Activated B cell treated with CpG ODN at 0.5 μM for 24 hours (primary cell): ENCODE measurements at regions of chr5 and their contacts with region 1.

Region 1: GRCh38 chr5:112160652-112161391 is 258.3 kb downstream of the EPB41L4A start:
- DNase-seq: peak; percentile 93
- ATAC-seq: peak; percentile 99
- H3K4me3 Mint-ChIP-seq: peak overlapping the region; percentile 97
- H3K27ac Mint-ChIP-seq: peak overlapping the region; percentile 82
- H3K4me1 Mint-ChIP-seq: peaks cover 25% of the 10 kb centered on the region
- H3K27me3 Mint-ChIP-seq: no peaks in the 10 kb centered on the region
- CTCF ChIP-seq: peak; percentile 89

Region 2: DNA sequence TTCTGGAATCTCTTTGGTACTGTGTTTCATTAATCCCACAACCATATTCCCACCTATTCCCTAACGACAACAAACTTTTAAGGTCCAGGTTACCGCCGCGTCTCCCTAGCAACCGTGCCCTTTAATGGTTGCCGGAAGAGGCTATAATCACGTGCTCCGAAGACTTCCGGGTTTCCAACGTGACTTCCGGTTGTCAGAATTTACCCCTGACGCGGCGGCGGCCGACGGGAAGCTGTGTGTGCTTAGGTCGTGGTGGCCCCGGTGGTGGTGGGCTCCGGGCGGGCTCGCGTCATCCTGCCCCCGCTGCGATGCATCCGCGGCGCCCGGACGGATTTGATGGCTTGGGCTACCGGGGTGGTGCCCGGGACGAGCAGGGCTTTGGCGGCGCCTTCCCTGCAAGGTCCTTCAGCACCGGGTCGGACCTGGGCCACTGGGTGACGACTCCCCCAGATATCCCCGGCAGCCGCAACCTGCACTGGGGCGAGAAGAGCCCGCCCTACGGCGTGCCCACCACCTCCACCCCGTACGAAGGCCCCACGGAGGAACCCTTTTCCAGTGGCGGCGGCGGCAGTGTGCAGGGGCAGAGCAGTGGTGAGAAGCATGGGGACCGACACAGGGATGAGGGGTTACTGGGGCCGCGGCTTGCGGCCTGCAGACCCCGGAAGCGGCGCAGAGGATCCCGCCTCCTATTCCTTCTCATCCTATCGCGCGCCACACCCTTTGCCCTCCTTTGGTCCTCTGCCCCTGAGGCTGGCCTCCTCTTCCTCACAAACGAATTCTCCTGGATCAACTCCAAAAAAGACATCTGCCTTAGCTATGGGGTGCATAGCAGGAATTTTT is 1421.8 kb before region 1 on chr5 and contains the start of gene SLC25A46:
- CTCF ChIA-PET with region 1: no interaction called
- POLR2A ChIA-PET with region 1: interaction called, 5 read pairs
- intact Hi-C with region 1: loop called (anchors 2 kb)
- DNase-seq: peak; percentile 79
- ATAC-seq: peak; percentile 82
- H3K4me3 Mint-ChIP-seq: peak within 1 kb of the TSS; percentile 97
- H3K27ac Mint-ChIP-seq: peak within 1 kb of the TSS; percentile 96
- H3K4me1 Mint-ChIP-seq: peaks cover 21% of the 10 kb centered on the region
- H3K27me3 Mint-ChIP-seq: peaks cover 3% of the 10 kb centered on the region
- CTCF ChIP-seq: no peak
- total RNA-seq, gene SLC25A46: 39.9 and 42.2 TPM in 2 replicates

Region 3: DNA sequence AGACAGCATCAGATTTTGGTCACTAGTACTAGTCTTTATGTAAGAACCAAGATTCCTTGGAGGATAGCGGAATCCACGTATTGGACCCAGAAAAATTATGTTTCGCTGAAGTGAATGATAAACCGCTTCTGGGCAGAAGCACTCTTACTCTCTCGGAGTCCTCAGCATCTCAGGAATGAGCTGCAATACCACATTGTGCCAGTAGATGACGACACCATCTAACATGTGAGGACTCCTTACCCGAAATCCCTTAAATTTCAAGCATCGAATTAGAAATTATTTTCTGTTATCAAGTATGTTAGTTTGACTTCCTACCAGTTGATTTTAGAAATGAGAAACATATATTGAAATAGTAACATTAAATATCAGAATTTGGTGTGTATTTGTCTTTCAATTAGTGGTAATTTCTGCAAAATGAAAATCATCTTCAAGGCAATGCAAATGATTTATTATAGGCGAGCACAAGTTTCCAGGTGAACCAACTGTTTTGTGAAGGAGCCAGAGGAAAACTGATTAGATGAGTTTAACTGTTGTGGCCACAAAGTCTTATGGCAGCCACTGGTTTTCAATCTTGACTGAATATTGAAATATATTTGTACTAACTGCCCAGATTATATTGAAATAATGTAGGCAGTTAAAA is 1002.6 kb before region 1 on chr5:
- CTCF ChIA-PET with region 1: no interaction called
- POLR2A ChIA-PET with region 1: no interaction called
- intact Hi-C with region 1: loop called (anchors 5 kb)
- DNase-seq: no peak
- ATAC-seq: peak; percentile 49
- H3K4me3 Mint-ChIP-seq: no peak overlapping the region
- H3K27ac Mint-ChIP-seq: no peak overlapping the region
- H3K4me1 Mint-ChIP-seq: no peaks in the 10 kb centered on the region
- H3K27me3 Mint-ChIP-seq: peaks cover 10% of the 10 kb centered on the region
- CTCF ChIP-seq: peak; percentile 99

Region 4: GRCh38 chr5:112116371-112116770 is 44.5 kb before region 1 on chr5:
- CTCF ChIA-PET with region 1: no interaction called
- POLR2A ChIA-PET with region 1: no interaction called
- intact Hi-C with region 1: no loop called
- DNase-seq: no peak
- ATAC-seq: no peak
- H3K4me3 Mint-ChIP-seq: no peak overlapping the region
- H3K27ac Mint-ChIP-seq: no peak overlapping the region
- H3K4me1 Mint-ChIP-seq: no peaks in the 10 kb centered on the region
- H3K27me3 Mint-ChIP-seq: peaks cover 9% of the 10 kb centered on the region
- CTCF ChIP-seq: no peak

Region 5: GRCh38 chr5:112174959-112175594 is 14.3 kb after region 1 on chr5:
- CTCF ChIA-PET with region 1: interaction called, 34 read pairs
- POLR2A ChIA-PET with region 1: interaction called, 3 read pairs
- intact Hi-C with region 1: no loop called
- DNase-seq: no peak
- ATAC-seq: peak; percentile 73
- H3K4me3 Mint-ChIP-seq: no peak overlapping the region
- H3K27ac Mint-ChIP-seq: no peak overlapping the region
- H3K4me1 Mint-ChIP-seq: peaks cover 4% of the 10 kb centered on the region
- H3K27me3 Mint-ChIP-seq: no peaks in the 10 kb centered on the region
- CTCF ChIP-seq: no peak

Region 6: DNA sequence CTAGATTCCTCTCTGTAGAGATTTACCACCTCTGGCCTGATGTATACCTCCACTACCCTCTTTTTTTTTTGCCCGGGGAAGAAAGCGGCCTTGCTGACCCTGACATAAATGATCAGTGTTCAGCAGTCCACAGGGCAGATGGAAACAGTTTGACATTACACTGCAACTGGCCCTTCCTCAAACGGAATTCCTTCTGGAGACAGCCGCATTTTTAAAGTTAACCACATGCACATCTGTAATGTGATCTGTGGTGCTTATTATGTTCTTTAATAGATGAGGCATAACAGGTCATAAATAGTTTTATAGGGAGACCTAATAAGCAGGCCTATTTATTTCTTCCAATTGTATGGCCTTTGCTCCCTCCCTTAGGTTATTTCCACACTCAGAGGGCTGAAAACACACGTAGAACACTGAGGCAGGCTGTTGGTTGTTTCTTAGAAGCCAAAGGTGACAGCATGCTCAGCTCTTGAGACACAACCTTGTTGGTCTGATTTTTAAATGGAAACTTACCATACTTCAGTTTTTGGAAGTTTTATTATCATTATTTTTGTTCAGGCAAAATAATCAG is 492.9 kb after region 1 on chr5:
- CTCF ChIA-PET with region 1: no interaction called
- POLR2A ChIA-PET with region 1: no interaction called
- intact Hi-C with region 1: no loop called
- DNase-seq: no peak
- ATAC-seq: no peak
- H3K4me3 Mint-ChIP-seq: no peak overlapping the region
- H3K27ac Mint-ChIP-seq: no peak overlapping the region
- H3K4me1 Mint-ChIP-seq: no peaks in the 10 kb centered on the region
- H3K27me3 Mint-ChIP-seq: peaks cover 11% of the 10 kb centered on the region
- CTCF ChIP-seq: no peak

Region 7: GRCh38 chr5:112976432-112977309 is 815.8 kb after region 1 on chr5 and contains the start of gene DCP2:
- CTCF ChIA-PET with region 1: no interaction called
- POLR2A ChIA-PET with region 1: interaction called, 7 read pairs
- intact Hi-C with region 1: loop called (anchors 2 kb)
- DNase-seq: peak; percentile 93
- ATAC-seq: peak; percentile 98
- H3K4me3 Mint-ChIP-seq: peak within 1 kb of the TSS; percentile 100
- H3K27ac Mint-ChIP-seq: peak within 1 kb of the TSS; percentile 96
- H3K4me1 Mint-ChIP-seq: peaks cover 53% of the 10 kb centered on the region
- H3K27me3 Mint-ChIP-seq: no peaks in the 10 kb centered on the region
- CTCF ChIP-seq: no peak
- total RNA-seq, gene DCP2: 53.5 and 56.0 TPM in 2 replicates